ENCODE measurements at regions of chr2 and their contacts with region 1.

Region 1: DNA sequence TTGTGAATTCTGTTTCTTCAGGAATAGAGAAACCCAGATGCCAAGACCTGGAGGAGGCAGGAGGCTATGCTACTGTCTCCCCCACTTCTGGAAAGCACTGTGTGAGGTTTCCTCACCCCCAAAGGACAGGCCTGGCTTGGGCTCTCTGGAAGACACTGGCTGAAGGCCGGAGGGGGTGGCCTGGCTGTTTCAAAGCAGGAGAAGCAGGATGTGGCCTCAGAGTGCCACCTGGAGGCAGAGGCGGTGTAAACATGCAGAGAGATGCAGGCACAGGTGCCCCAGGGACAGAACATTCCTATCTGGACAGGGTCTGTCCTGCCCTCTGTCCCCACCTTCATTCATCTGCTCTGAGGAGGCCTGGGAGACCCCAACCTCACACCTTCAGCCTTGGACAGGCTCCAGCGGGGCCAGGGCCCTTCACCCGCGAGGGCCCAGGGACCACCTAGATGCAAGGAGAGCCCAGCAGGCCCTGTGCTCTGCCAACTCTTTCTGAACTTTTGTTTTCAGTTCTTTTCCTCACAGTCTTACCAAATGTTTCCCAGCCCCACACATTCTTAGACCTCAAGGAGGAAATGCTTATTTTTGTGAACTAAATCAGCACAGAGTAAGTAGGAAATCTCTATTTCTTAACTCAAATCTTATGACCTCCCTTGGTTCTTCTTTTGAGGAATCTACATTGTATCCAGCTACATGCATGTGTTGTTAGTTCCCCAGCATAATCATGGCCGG is 79.2 kb downstream of the LONRF2 start:
- DNase-seq: peak; percentile 42 to 61 (median 52)
- H3K4me3 ChIP-seq: no peak overlapping the region
- H3K27ac ChIP-seq: no peak overlapping the region
- H3K4me1 ChIP-seq: no peaks in the 10 kb centered on the region
- H3K27me3 ChIP-seq: no peaks in the 10 kb centered on the region

Region 2: GRCh38 chr2:99559075-99559662 is 683.9 kb before region 1 on chr2:
- CTCF ChIA-PET with region 1: interaction called, 22 read pairs
- POLR2A ChIA-PET with region 1: no interaction called
- DNase-seq: peak; percentile 65 to 83 (median 79)
- H3K4me3 ChIP-seq: no peak overlapping the region
- H3K27ac ChIP-seq: no peak overlapping the region
- H3K4me1 ChIP-seq: peaks cover 0 to 11% (median 7%) of the 10 kb centered on the region in 4 experiments
- H3K27me3 ChIP-seq: no peaks in the 10 kb centered on the region

Region 3: GRCh38 chr2:99725820-99726219 is 517.2 kb before region 1 on chr2:
- CTCF ChIA-PET with region 1: interaction called, 11 read pairs
- POLR2A ChIA-PET with region 1: no interaction called
- DNase-seq: peak in 2 of 3 donors; percentile 21 to 25
- H3K4me3 ChIP-seq: no peak overlapping the region
- H3K27ac ChIP-seq: no peak overlapping the region
- H3K4me1 ChIP-seq: peaks cover 5 to 21% (median 12%) of the 10 kb centered on the region in 4 experiments
- H3K27me3 ChIP-seq: no peaks in the 10 kb centered on the region

Region 4: GRCh38 chr2:99818842-99819241 is 424.2 kb before region 1 on chr2:
- CTCF ChIA-PET with region 1: interaction called, 33 read pairs
- POLR2A ChIA-PET with region 1: no interaction called
- DNase-seq: peak; percentile 46 to 60 (median 56)
- H3K4me3 ChIP-seq: no peak overlapping the region
- H3K27ac ChIP-seq: no peak overlapping the region
- H3K4me1 ChIP-seq: peaks cover 0 to 3% (median 0%) of the 10 kb centered on the region in 4 experiments
- H3K27me3 ChIP-seq: no peaks in the 10 kb centered on the region

Region 5: GRCh38 chr2:100214265-100214971 is 28.6 kb before region 1 on chr2:
- CTCF ChIA-PET with region 1: no interaction called
- POLR2A ChIA-PET with region 1: no interaction called
- DNase-seq: peak in 2 of 3 donors; percentile 54 to 68
- H3K4me3 ChIP-seq: peak overlapping the region in 1 of 7 experiments; percentile 32
- H3K27ac ChIP-seq: no peak overlapping the region
- H3K4me1 ChIP-seq: peaks cover 2 to 17% (median 12%) of the 10 kb centered on the region in 4 experiments
- H3K27me3 ChIP-seq: no peaks in the 10 kb centered on the region

Region 6: GRCh38 chr2:100262555-100263320 is 19.7 kb after region 1 on chr2:
- CTCF ChIA-PET with region 1: interaction called, 50 read pairs
- POLR2A ChIA-PET with region 1: no interaction called
- DNase-seq: peak; percentile 32 to 59 (median 58)
- H3K4me3 ChIP-seq: peak overlapping the region in 1 of 7 experiments; percentile 18
- H3K27ac ChIP-seq: no peak overlapping the region
- H3K4me1 ChIP-seq: peaks cover 0 to 5% (median 1%) of the 10 kb centered on the region in 4 experiments
- H3K27me3 ChIP-seq: no peaks in the 10 kb centered on the region

Region 7: GRCh38 chr2:100407108-100407507 is 164.1 kb after region 1 on chr2:
- CTCF ChIA-PET with region 1: no interaction called
- POLR2A ChIA-PET with region 1: no interaction called
- DNase-seq: no peak
- H3K4me3 ChIP-seq: no peak overlapping the region
- H3K27ac ChIP-seq: no peak overlapping the region
- H3K4me1 ChIP-seq: no peaks in the 10 kb centered on the region
- H3K27me3 ChIP-seq: no peaks in the 10 kb centered on the region